ENCODE measurements at regions of chr2 and their contacts with region 1.

Region 1: GRCh38 chr2:201071479-201072200 is at the starts of genes HYCC2 and NDUFB3:
- DNase-seq: peak; percentile 97 to 98 (median 98)
- H3K4me3 ChIP-seq: peak within 1 kb of the TSS; percentile 87 to 100 (median 98)
- H3K27ac ChIP-seq: peak within 1 kb of the TSS; percentile 97
- H3K4me1 ChIP-seq: peaks cover 16 to 42% (median 30%) of the 10 kb centered on the region in 4 experiments
- H3K27me3 ChIP-seq: no peaks in the 10 kb centered on the region

Region 2: GRCh38 chr2:200279857-200280256 is 791.8 kb before region 1 on chr2:
- CTCF ChIA-PET with region 1: no interaction called
- POLR2A ChIA-PET with region 1: no interaction called
- DNase-seq: no peak
- H3K4me3 ChIP-seq: no peak overlapping the region
- H3K27ac ChIP-seq: no peak overlapping the region
- H3K4me1 ChIP-seq: no peaks in the 10 kb centered on the region
- H3K27me3 ChIP-seq: no peaks in the 10 kb centered on the region

Region 3: DNA sequence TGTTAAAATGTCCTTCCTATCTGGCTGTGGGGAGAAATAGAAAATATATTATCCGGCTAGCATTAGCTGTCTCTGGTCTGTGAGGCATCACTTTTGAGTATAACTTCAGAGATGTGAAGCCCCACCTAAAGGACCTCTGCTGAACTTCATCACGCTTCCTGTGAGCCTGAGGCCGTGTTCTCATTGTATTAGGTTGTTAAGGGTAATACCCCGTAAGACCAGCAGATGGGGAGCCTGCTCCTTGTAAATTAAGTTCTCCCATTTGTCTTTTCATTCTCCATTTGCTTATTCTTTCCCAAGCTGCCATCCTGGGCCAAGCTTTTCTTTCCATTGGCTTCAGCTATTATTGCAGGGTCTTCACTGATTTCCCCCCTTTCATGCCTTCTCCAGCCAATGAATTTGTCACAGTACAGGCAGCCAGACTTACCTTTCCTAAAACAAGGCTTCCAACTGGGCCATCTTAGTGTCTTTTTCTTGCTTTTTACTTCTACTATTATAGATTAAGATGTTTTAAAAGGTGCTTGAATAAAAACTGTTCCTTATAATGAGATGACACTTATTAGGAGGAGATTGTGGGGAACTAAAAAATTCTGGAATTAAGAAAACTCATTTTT is 170.1 kb before region 1 on chr2:
- CTCF ChIA-PET with region 1: interaction called, 60 read pairs
- POLR2A ChIA-PET with region 1: no interaction called
- DNase-seq: peak; percentile 92 to 96 (median 94)
- H3K4me3 ChIP-seq: no peak overlapping the region
- H3K27ac ChIP-seq: no peak overlapping the region
- H3K4me1 ChIP-seq: peaks cover 0 to 4% (median 0%) of the 10 kb centered on the region in 4 experiments
- H3K27me3 ChIP-seq: no peaks in the 10 kb centered on the region

Region 4: GRCh38 chr2:200963124-200963917 is 108.3 kb before region 1 on chr2 and contains the start of gene ORC2:
- CTCF ChIA-PET with region 1: interaction called, 39 read pairs
- POLR2A ChIA-PET with region 1: interaction called, 5 read pairs
- DNase-seq: peak; percentile 95 to 96 (median 96)
- H3K4me3 ChIP-seq: peak within 1 kb of the TSS; percentile 80 to 97 (median 91)
- H3K27ac ChIP-seq: peak within 1 kb of the TSS; percentile 84 to 92
- H3K4me1 ChIP-seq: peaks cover 9 to 30% (median 20%) of the 10 kb centered on the region in 4 experiments
- H3K27me3 ChIP-seq: no peaks in the 10 kb centered on the region

Region 5: GRCh38 chr2:200968734-200969133 is 102.9 kb before region 1 on chr2:
- CTCF ChIA-PET with region 1: interaction called, 39 read pairs
- POLR2A ChIA-PET with region 1: interaction called, 5 read pairs
- DNase-seq: peak in 2 of 3 donors; percentile 26 to 50
- H3K4me3 ChIP-seq: no peak overlapping the region
- H3K27ac ChIP-seq: no peak overlapping the region
- H3K4me1 ChIP-seq: peaks cover 3 to 9% (median 6%) of the 10 kb centered on the region in 4 experiments
- H3K27me3 ChIP-seq: no peaks in the 10 kb centered on the region

Region 6: GRCh38 chr2:201057087-201057521 is 14.5 kb before region 1 on chr2:
- CTCF ChIA-PET with region 1: interaction called, 22 read pairs
- POLR2A ChIA-PET with region 1: no interaction called
- DNase-seq: no peak
- H3K4me3 ChIP-seq: no peak overlapping the region
- H3K27ac ChIP-seq: no peak overlapping the region
- H3K4me1 ChIP-seq: peaks cover 0 to 6% (median 0%) of the 10 kb centered on the region in 4 experiments
- H3K27me3 ChIP-seq: no peaks in the 10 kb centered on the region

Region 7: GRCh38 chr2:201167546-201167945 is 95.9 kb after region 1 on chr2:
- CTCF ChIA-PET with region 1: interaction called, 14 read pairs
- POLR2A ChIA-PET with region 1: no interaction called
- DNase-seq: no peak
- H3K4me3 ChIP-seq: no peak overlapping the region
- H3K27ac ChIP-seq: no peak overlapping the region
- H3K4me1 ChIP-seq: peaks cover 0 to 4% (median under 1%) of the 10 kb centered on the region in 4 experiments
- H3K27me3 ChIP-seq: no peaks in the 10 kb centered on the region

Region 8: GRCh38 chr2:201182650-201183364 is 111.2 kb after region 1 on chr2 and contains the start of gene CASP10:
- CTCF ChIA-PET with region 1: interaction called, 12 read pairs
- POLR2A ChIA-PET with region 1: no interaction called
- DNase-seq: peak; percentile 92 to 95 (median 95)
- H3K4me3 ChIP-seq: peak within 1 kb of the TSS; percentile 14 to 100 (median 79)
- H3K27ac ChIP-seq: peak within 1 kb of the TSS; percentile 78 to 90
- H3K4me1 ChIP-seq: peaks cover 29 to 46% (median 30%) of the 10 kb centered on the region in 4 experiments
- H3K27me3 ChIP-seq: no peaks in the 10 kb centered on the region

Region 9: GRCh38 chr2:201313362-201313761 is 241.7 kb after region 1 on chr2:
- CTCF ChIA-PET with region 1: no interaction called
- POLR2A ChIA-PET with region 1: no interaction called
- DNase-seq: no peak
- H3K4me3 ChIP-seq: no peak overlapping the region
- H3K27ac ChIP-seq: no peak overlapping the region
- H3K4me1 ChIP-seq: no peaks in the 10 kb centered on the region
- H3K27me3 ChIP-seq: no peaks in the 10 kb centered on the region

Region 10: DNA sequence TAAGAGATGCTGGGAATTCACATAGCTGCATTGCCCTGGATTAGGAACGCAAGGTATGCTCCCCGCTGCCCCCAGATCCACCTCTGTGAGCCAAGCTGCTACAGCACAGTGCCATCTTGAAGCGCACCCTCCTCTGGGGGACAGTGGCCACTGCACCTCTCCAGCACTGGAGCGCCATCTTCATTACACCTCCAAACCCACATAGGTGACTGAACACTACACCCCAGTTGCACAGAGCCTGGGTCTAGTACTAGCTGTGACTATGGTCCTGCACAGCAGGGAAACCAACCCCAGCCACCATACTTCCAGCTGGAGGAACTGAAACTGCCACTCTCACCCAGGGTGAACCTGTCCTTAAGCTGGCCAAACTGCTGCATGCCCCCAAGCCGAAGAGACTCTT is 487.0 kb after region 1 on chr2:
- CTCF ChIA-PET with region 1: no interaction called
- POLR2A ChIA-PET with region 1: no interaction called
- DNase-seq: no peak
- H3K4me3 ChIP-seq: no peak overlapping the region
- H3K27ac ChIP-seq: no peak overlapping the region
- H3K4me1 ChIP-seq: no peaks in the 10 kb centered on the region
- H3K27me3 ChIP-seq: no peaks in the 10 kb centered on the region